Activated CD4-positive, alpha-beta memory T cell treated with anti-CD3 and anti-CD28 coated beads for 36 hours (primary cell): ENCODE measurements at regions of chr11 and their contacts with region 1.

Region 1: GRCh38 chr11:119334174-119334930 is at the start of gene RNF26:
- DNase-seq: peak; percentile 97
- H3K4me3 Mint-ChIP-seq: peak within 1 kb of the TSS; percentile 93
- H3K27ac Mint-ChIP-seq: peak within 1 kb of the TSS; percentile 85
- H3K4me1 Mint-ChIP-seq: peaks cover 27% of the 10 kb centered on the region
- H3K27me3 Mint-ChIP-seq: peaks cover 10% of the 10 kb centered on the region
- total RNA-seq, gene RNF26: 33.7 to 35.2 TPM

Region 2: GRCh38 chr11:118988280-118988679 is 346.1 kb before region 1 on chr11:
- CTCF ChIA-PET with region 1: no interaction called
- POLR2A ChIA-PET with region 1: no interaction called
- intact Hi-C with region 1: no loop called
- DNase-seq: no peak
- H3K4me3 Mint-ChIP-seq: no peak overlapping the region
- H3K27ac Mint-ChIP-seq: no peak overlapping the region
- H3K4me1 Mint-ChIP-seq: no peaks in the 10 kb centered on the region
- H3K27me3 Mint-ChIP-seq: no peaks in the 10 kb centered on the region

Region 3: GRCh38 chr11:119121008-119121810 is 213.1 kb before region 1 on chr11 and contains the start of gene HINFP:
- CTCF ChIA-PET with region 1: interaction called, 4 read pairs
- POLR2A ChIA-PET with region 1: no interaction called
- intact Hi-C with region 1: loop called (anchors 5 kb)
- DNase-seq: peak; percentile 100
- H3K4me3 Mint-ChIP-seq: peak within 1 kb of the TSS; percentile 88
- H3K27ac Mint-ChIP-seq: peak within 1 kb of the TSS; percentile 78
- H3K4me1 Mint-ChIP-seq: peaks cover 28% of the 10 kb centered on the region
- H3K27me3 Mint-ChIP-seq: no peaks in the 10 kb centered on the region
- total RNA-seq, gene HINFP: 22.3 to 24.3 TPM

Region 4: GRCh38 chr11:119298726-119299125 is 35.6 kb before region 1 on chr11:
- CTCF ChIA-PET with region 1: interaction called, 10 read pairs
- POLR2A ChIA-PET with region 1: no interaction called
- intact Hi-C with region 1: no loop called
- DNase-seq: no peak
- H3K4me3 Mint-ChIP-seq: no peak overlapping the region
- H3K27ac Mint-ChIP-seq: no peak overlapping the region
- H3K4me1 Mint-ChIP-seq: no peaks in the 10 kb centered on the region
- H3K27me3 Mint-ChIP-seq: no peaks in the 10 kb centered on the region

Region 5: GRCh38 chr11:119323538-119324033 is 10.8 kb before region 1 on chr11:
- CTCF ChIA-PET with region 1: interaction called, 139 read pairs
- POLR2A ChIA-PET with region 1: interaction called, 3 read pairs
- intact Hi-C with region 1: loop called (anchors 2 kb)
- DNase-seq: peak; percentile 90
- H3K4me3 Mint-ChIP-seq: no peak overlapping the region
- H3K27ac Mint-ChIP-seq: no peak overlapping the region
- H3K4me1 Mint-ChIP-seq: peaks cover 20% of the 10 kb centered on the region
- H3K27me3 Mint-ChIP-seq: peaks cover 3% of the 10 kb centered on the region

Region 6: GRCh38 chr11:119356349-119357031 is 22.1 kb after region 1 on chr11:
- CTCF ChIA-PET with region 1: interaction called, 38 read pairs
- POLR2A ChIA-PET with region 1: no interaction called
- intact Hi-C with region 1: loop called (anchors 2 kb)
- DNase-seq: peak; percentile 83
- H3K4me3 Mint-ChIP-seq: peak overlapping the region; percentile 74
- H3K27ac Mint-ChIP-seq: no peak overlapping the region
- H3K4me1 Mint-ChIP-seq: peaks cover 15% of the 10 kb centered on the region
- H3K27me3 Mint-ChIP-seq: peaks cover 24% of the 10 kb centered on the region

Region 7: GRCh38 chr11:119373921-119374631 is 39.7 kb after region 1 on chr11:
- CTCF ChIA-PET with region 1: interaction called, 45 read pairs
- POLR2A ChIA-PET with region 1: no interaction called
- intact Hi-C with region 1: no loop called
- DNase-seq: peak; percentile 73
- H3K4me3 Mint-ChIP-seq: no peak overlapping the region
- H3K27ac Mint-ChIP-seq: no peak overlapping the region
- H3K4me1 Mint-ChIP-seq: peaks cover 8% of the 10 kb centered on the region
- H3K27me3 Mint-ChIP-seq: peaks cover 1% of the 10 kb centered on the region

Region 8: GRCh38 chr11:119474682-119475596 is 140.6 kb after region 1 on chr11:
- CTCF ChIA-PET with region 1: interaction called, 34 read pairs
- POLR2A ChIA-PET with region 1: no interaction called
- intact Hi-C with region 1: no loop called
- DNase-seq: peak; percentile 72
- H3K4me3 Mint-ChIP-seq: no peak overlapping the region
- H3K27ac Mint-ChIP-seq: no peak overlapping the region
- H3K4me1 Mint-ChIP-seq: no peaks in the 10 kb centered on the region
- H3K27me3 Mint-ChIP-seq: peaks cover 14% of the 10 kb centered on the region